Mammary epithelial cell (primary cell): ENCODE measurements at regions of chr6 and their contacts with region 1.

Region 1: GRCh38 chr6:30556066-30556905 is at the start of gene GNL1:
- DNase-seq: peak; percentile 95
- H3K4me3 ChIP-seq: peak within 1 kb of the TSS; percentile 68 to 98 (median 93)
- H3K27ac ChIP-seq: peak within 1 kb of the TSS; percentile 90
- H3K4me1 ChIP-seq: peaks cover 13% of the 10 kb centered on the region
- H3K27me3 ChIP-seq: no peaks in the 10 kb centered on the region
- CTCF ChIP-seq: no peak
- total RNA-seq, gene GNL1: 40.8 to 84.4 TPM

Region 2: DNA sequence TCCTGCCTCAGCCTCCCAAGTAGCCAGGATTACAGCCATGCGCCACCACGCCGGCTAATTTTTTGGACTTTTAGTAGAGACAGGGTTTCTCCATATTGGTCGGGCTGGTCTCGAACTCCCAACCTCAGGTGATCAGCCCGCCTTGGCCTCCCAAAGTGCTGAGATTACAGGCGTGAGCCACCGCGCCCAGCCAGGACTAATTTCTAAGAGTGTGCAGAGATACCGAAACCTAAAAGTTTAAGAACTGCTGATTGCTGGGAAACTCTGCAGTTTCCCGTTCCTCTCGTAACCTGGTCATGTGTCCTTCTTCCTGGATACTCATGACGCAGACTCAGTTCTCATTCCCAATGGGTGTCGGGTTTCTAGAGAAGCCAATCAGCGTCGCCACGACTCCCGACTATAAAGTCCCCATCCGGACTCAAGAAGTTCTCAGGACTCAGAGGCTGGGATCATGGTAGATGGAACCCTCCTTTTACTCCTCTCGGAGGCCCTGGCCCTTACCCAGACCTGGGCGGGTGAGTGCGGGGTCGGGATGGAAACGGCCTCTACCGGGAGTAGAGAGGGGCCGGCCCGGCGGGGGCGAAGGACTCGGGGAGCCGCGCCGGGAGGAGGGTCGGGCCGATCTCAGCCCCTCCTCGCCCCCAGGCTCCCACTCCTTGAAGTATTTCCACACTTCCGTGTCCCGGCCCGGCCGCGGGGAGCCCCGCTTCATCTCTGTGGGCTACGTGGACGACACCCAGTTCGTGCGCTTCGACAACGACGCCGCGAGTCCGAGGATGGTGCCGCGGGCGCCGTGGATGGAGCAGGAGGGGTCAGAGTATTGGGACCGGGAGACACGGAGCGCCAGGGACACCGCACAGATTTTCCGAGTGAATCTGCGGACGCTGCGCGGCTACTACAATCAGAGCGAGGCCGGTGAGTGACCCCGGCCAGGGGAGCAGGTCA is 66.9 kb before region 1 on chr6 and contains the start of gene HLA-E:
- CTCF ChIA-PET with region 1: interaction called, 10 read pairs
- dilution Hi-C with region 1: no loop called
- in situ Hi-C with region 1: no loop called
- intact Hi-C with region 1: no loop called
- DNase-seq: peak; percentile 99
- H3K4me3 ChIP-seq: peak within 1 kb of the TSS; percentile 92 to 99 (median 93)
- H3K27ac ChIP-seq: peak within 1 kb of the TSS; percentile 93
- H3K4me1 ChIP-seq: peaks cover 12% of the 10 kb centered on the region
- H3K27me3 ChIP-seq: no peaks in the 10 kb centered on the region
- CTCF ChIP-seq: no peak
- total RNA-seq, gene HLA-E: 106 to 145 TPM

Region 3: GRCh38 chr6:30571075-30571768 is 14.9 kb after region 1 on chr6 and contains the start of gene ABCF1:
- CTCF ChIA-PET with region 1: no interaction called
- dilution Hi-C with region 1: no loop called
- in situ Hi-C with region 1: no loop called
- intact Hi-C with region 1: loop called (anchors 1 kb)
- DNase-seq: peak; percentile 97
- H3K4me3 ChIP-seq: peak within 1 kb of the TSS; percentile 70 to 99 (median 81)
- H3K27ac ChIP-seq: peak within 1 kb of the TSS; percentile 85
- H3K4me1 ChIP-seq: peaks cover 17% of the 10 kb centered on the region
- H3K27me3 ChIP-seq: no peaks in the 10 kb centered on the region
- CTCF ChIP-seq: no peak
- total RNA-seq, gene ABCF1: 31.8 to 59.8 TPM

Region 4: GRCh38 chr6:30717042-30717844 is 161.0 kb after region 1 on chr6 and contains the start of gene MDC1:
- CTCF ChIA-PET with region 1: no interaction called
- dilution Hi-C with region 1: no loop called
- in situ Hi-C with region 1: no loop called
- intact Hi-C with region 1: loop called (anchors 2 kb)
- DNase-seq: peak; percentile 100
- H3K4me3 ChIP-seq: peak within 1 kb of the TSS; percentile 56 to 69 (median 61)
- H3K27ac ChIP-seq: peak within 1 kb of the TSS; percentile 78
- H3K4me1 ChIP-seq: peaks cover 33% of the 10 kb centered on the region
- H3K27me3 ChIP-seq: no peaks in the 10 kb centered on the region
- CTCF ChIP-seq: peak in 1 of 2 donors; percentile 43
- total RNA-seq, gene MDC1: 12.8 to 36.7 TPM

Region 5: GRCh38 chr6:30877419-30878371 is 321.4 kb after region 1 on chr6:
- CTCF ChIA-PET with region 1: no interaction called
- dilution Hi-C with region 1: no loop called
- in situ Hi-C with region 1: no loop called
- intact Hi-C with region 1: loop called (anchors 10 kb)
- DNase-seq: peak; percentile 80
- H3K4me3 ChIP-seq: peak overlapping the region in 2 of 3 experiments; percentile 13 to 20
- H3K27ac ChIP-seq: peak overlapping the region; percentile 63
- H3K4me1 ChIP-seq: peaks cover 37% of the 10 kb centered on the region
- H3K27me3 ChIP-seq: no peaks in the 10 kb centered on the region
- CTCF ChIP-seq: peak; percentile 92 to 96